Naive thymus-derived CD4-positive, alpha-beta T cell (primary cell): ENCODE measurements at regions of chr13 and their contacts with region 1.

Region 1: DNA sequence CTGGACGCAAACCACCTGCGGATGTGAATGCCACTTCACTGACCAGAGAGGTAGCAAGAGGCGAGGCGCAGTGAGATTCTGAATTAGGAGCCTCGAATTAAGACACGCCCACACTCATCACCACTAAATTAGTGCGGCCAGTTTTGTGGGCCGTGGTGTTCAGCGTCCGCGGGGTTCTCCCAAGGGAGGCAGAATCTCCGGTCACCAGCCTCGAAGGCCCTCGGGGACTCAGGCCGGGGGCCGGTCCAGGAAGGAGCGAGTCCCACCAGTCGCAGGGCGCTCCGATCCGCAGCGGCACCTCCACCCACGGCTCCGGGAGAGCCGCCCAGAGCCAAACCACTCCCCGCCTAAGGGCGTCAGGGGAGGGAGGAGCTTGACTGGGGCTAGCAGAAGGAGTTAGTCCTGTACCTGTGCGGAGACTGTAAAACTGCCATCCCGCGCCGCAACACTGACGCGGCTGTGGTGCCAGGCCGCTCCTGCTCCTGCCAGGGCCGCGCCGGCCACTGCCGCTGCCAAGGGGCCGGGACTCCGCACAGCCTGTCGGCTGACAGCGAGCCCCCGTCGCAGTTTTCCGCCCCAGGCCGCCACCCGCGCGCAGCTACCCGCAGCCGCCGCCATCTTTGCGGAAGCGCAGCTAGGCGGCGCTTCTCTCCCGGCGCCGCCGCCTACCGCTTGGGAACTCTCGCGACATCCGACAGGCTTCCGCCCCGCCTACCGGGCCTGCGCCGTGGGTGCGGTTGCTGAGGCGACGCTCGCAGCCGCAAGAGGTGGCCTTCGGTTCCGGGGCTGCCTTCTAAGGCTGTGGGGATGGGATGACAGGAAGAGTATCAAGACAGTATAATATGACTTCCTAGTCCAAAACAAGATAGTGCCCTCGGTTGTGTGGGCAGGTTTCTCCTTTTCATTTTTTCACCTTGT is at the start of gene MICU2:
- DNase-seq: peak; percentile 92 to 98 (median 96)
- ATAC-seq: peak; percentile 95
- H3K4me3 ChIP-seq: peak within 1 kb of the TSS; percentile 66
- H3K4me3 Mint-ChIP-seq: peak within 1 kb of the TSS; percentile 77 to 94 (median 88)
- H3K27ac ChIP-seq: peak within 1 kb of the TSS; percentile 93
- H3K27ac Mint-ChIP-seq: peak within 1 kb of the TSS; percentile 91 to 97 (median 95)
- H3K4me1 ChIP-seq: peaks cover 16 to 27% of the 10 kb centered on the region in 2 donors
- H3K4me1 Mint-ChIP-seq: peaks cover 25 to 53% (median 49%) of the 10 kb centered on the region in 7 donors
- H3K27me3 ChIP-seq: no peaks in the 10 kb centered on the region
- H3K27me3 Mint-ChIP-seq: peaks cover 0 to 21% (median 7%) of the 10 kb centered on the region in 5 donors
- total RNA-seq, gene MICU2: 32.5 to 45.6 (median 37.5) TPM

Region 2: GRCh38 chr13:19782049-19782726 is 1821.6 kb before region 1 on chr13:
- CTCF ChIA-PET with region 1: no interaction called
- POLR2A ChIA-PET with region 1: no interaction called
- intact Hi-C with region 1: loop called (anchors 2 to 5 kb)
- DNase-seq: peak; percentile 26 to 61 (median 49)
- ATAC-seq: peak; percentile 63
- H3K4me3 ChIP-seq: peak overlapping the region; percentile 99
- H3K4me3 Mint-ChIP-seq: peak overlapping the region; percentile 96 to 100 (median 98)
- H3K27ac ChIP-seq: peak overlapping the region; percentile 98
- H3K27ac Mint-ChIP-seq: peak overlapping the region; percentile 96 to 100 (median 99)
- H3K4me1 ChIP-seq: peaks cover 0 to 8% of the 10 kb centered on the region in 2 donors
- H3K4me1 Mint-ChIP-seq: peaks cover 0 to 13% (median 10%) of the 10 kb centered on the region in 7 donors
- H3K27me3 ChIP-seq: no peaks in the 10 kb centered on the region
- H3K27me3 Mint-ChIP-seq: peaks cover 0 to 5% (median 0%) of the 10 kb centered on the region in 5 donors

Region 3: DNA sequence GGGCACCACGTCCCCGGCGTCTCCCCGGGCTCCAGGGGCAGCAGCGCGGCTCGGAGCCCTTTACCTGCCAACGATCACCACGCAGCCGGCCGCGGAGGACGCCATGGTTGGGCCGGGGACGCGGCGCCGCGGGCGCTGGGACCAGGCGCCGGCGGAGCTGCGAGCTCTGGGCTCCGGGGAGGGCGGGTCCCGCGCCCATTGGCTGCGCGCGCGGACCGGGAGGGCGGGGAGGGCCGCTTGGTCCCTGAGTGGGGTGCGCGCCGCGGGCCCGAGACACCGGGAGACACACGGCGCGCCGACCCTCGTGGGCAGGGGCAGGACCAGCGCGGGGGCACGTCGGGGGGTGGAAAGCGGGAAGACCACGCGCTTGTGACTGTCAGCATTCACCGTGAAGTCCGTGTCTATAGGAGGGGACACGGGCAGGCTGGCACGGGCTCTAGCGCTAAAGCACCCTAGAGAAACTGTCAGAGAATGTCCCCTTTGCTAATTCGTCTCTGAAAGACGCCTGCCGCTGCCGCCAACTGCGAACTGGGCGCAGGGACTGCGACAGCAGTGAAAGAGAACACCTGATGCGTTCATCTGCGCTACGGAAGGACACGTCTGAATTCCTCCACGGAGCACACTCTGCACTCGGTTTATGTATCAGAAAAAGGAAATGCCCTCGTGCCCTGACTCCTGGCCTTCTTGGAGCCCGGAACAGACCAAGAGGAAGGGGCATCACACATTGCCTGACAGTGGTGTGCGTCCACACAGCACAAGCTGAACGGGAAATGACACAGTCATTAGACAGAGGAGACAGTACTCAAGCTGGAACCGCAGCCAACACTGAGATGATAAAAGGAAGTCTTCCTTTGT is 1077.9 kb before region 1 on chr13 and contains the start of gene CRYL1:
- CTCF ChIA-PET with region 1: no interaction called
- POLR2A ChIA-PET with region 1: no interaction called
- intact Hi-C with region 1: loop called in 1 of 2 experiments (anchors 5 kb)
- DNase-seq: peak; percentile 56 to 78 (median 68)
- ATAC-seq: peak; percentile 92
- H3K4me3 ChIP-seq: peak within 1 kb of the TSS; percentile 68
- H3K4me3 Mint-ChIP-seq: peak within 1 kb of the TSS; percentile 76 to 94 (median 87)
- H3K27ac ChIP-seq: peak within 1 kb of the TSS; percentile 65
- H3K27ac Mint-ChIP-seq: peak within 1 kb of the TSS; percentile 66 to 96 (median 88)
- H3K4me1 ChIP-seq: peaks cover 0 to 7% of the 10 kb centered on the region in 2 donors
- H3K4me1 Mint-ChIP-seq: peaks cover 11 to 40% (median 25%) of the 10 kb centered on the region in 7 donors
- H3K27me3 ChIP-seq: no peaks in the 10 kb centered on the region
- H3K27me3 Mint-ChIP-seq: peaks cover 0 to 9% (median 0%) of the 10 kb centered on the region in 5 donors
- total RNA-seq, gene CRYL1: 12.3 to 21.2 (median 16.3) TPM

Region 4: GRCh38 chr13:20902438-20903163 is 701.2 kb before region 1 on chr13 and contains the start of gene XPO4:
- CTCF ChIA-PET with region 1: no interaction called
- POLR2A ChIA-PET with region 1: interaction called, 3 read pairs
- intact Hi-C with region 1: loop called in 1 of 2 experiments (anchors 5 kb)
- DNase-seq: peak; percentile 68 to 85 (median 77)
- ATAC-seq: peak; percentile 97
- H3K4me3 ChIP-seq: peak within 1 kb of the TSS; percentile 98
- H3K4me3 Mint-ChIP-seq: peak within 1 kb of the TSS; percentile 93 to 98 (median 96)
- H3K27ac ChIP-seq: peak within 1 kb of the TSS; percentile 83
- H3K27ac Mint-ChIP-seq: peak within 1 kb of the TSS; percentile 89 to 98 (median 95)
- H3K4me1 ChIP-seq: peaks cover 10 to 21% of the 10 kb centered on the region in 2 donors
- H3K4me1 Mint-ChIP-seq: peaks cover 15 to 41% (median 32%) of the 10 kb centered on the region in 7 donors
- H3K27me3 ChIP-seq: no peaks in the 10 kb centered on the region
- H3K27me3 Mint-ChIP-seq: peaks cover 0 to 3% (median 0%) of the 10 kb centered on the region in 5 donors
- total RNA-seq, gene XPO4: 20.9 to 26.5 (median 23.5) TPM

Region 5: DNA sequence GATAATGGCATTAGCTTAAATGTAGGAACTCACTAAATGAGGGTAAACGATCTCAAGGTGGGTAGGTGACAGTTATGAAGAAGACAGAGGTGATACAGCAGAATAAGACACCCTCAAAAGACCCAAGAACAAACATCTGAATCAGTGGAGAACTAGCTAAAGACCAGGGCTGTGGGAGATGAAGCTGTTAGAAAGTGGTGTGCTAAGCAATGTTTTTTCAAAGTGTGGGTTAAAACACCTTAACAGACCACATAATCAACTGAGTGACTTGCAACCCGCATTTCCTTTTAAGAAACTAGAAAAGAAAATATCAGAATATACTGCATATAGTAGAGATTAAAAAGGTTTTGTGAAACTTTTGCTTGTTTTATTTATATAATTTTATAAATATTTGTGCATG is 214.7 kb before region 1 on chr13:
- CTCF ChIA-PET with region 1: no interaction called
- POLR2A ChIA-PET with region 1: no interaction called
- intact Hi-C with region 1: no loop called
- DNase-seq: no peak
- ATAC-seq: no peak
- H3K4me3 ChIP-seq: no peak overlapping the region
- H3K4me3 Mint-ChIP-seq: no peak overlapping the region
- H3K27ac ChIP-seq: no peak overlapping the region
- H3K27ac Mint-ChIP-seq: peak overlapping the region in 7 of 9 donors; percentile 8 to 70 (median 46)
- H3K4me1 ChIP-seq: no peaks in the 10 kb centered on the region
- H3K4me1 Mint-ChIP-seq: peaks cover 7 to 23% (median 15%) of the 10 kb centered on the region in 7 donors
- H3K27me3 ChIP-seq: no peaks in the 10 kb centered on the region
- H3K27me3 Mint-ChIP-seq: no peaks in the 10 kb centered on the region

Region 6: DNA sequence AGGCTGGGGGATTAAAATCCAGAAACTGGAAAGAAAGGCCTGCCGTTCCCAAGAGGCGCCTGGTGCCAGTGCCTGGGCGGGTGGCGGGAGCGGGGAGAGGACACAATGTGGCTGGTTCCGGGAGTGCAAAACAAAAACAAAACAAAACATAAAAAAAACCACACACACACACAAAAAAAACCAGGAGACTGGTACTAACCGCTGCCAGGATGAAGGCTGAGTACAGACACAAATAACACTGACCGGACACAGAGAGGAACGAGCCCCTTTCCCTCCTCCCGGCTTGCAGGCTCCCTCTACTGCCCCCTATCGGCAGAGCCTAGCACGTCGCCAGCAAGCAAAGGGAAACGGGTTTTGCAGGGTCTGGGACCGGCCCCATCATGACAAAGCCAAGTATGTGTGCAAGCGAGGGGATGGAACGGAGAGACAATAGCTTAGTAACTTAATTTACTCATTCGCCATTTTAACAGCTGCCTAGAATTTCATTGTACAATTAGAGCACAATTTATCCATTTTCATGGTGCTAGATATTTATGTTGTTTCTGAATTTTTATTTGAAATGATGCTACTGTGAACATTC is 126.8 kb before region 1 on chr13:
- CTCF ChIA-PET with region 1: no interaction called
- POLR2A ChIA-PET with region 1: no interaction called
- intact Hi-C with region 1: loop called in 1 of 2 experiments (anchors 5 kb)
- DNase-seq: peak; percentile 59 to 82 (median 65)
- ATAC-seq: peak; percentile 94
- H3K4me3 ChIP-seq: peak overlapping the region; percentile 50
- H3K4me3 Mint-ChIP-seq: peak overlapping the region; percentile 74 to 87 (median 82)
- H3K27ac ChIP-seq: peak overlapping the region; percentile 24
- H3K27ac Mint-ChIP-seq: peak overlapping the region in 8 of 9 donors; percentile 22 to 86 (median 58)
- H3K4me1 ChIP-seq: no peaks in the 10 kb centered on the region
- H3K4me1 Mint-ChIP-seq: peaks cover 7 to 17% (median 11%) of the 10 kb centered on the region in 7 donors
- H3K27me3 ChIP-seq: no peaks in the 10 kb centered on the region
- H3K27me3 Mint-ChIP-seq: peaks cover 0 to 5% (median 0%) of the 10 kb centered on the region in 5 donors

Region 7: DNA sequence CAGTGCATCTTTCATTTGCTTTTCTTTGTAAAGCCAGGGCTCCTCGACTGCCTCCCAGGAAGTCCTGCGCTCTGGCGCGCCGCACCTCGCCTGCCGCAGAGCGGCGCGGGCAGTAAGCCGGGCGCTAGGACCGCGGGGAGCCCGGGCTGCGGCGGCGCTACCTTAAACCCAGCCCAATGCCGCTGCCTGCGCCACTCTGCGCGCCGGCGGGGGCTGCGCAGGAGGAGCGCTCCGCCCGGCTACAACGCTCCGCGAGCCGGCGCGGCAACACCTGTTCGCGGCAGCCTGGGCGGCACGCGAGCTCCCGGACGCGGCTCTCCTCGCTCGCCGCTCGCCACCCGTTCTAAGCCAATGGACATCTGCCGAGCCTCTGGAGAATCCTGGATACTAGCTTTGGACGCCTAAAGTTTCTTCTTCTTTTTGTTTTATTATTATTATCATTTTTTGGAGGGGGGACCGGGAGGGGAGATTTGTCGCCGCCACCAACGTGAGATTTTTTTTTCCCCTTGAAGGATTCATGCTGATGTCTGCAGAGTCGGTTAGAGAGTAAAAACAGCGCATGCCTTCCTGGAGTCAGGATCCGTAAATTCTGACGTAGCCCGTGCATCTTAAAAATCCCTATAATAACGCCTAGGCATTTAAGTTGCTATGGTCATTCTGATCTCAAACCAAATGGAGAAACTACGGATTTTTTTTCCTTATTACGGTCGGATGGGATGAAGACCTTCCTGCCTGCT is 67.3 kb after region 1 on chr13 and contains the start of gene FGF9:
- CTCF ChIA-PET with region 1: interaction called, 3 read pairs
- POLR2A ChIA-PET with region 1: interaction called, 86 read pairs
- intact Hi-C with region 1: loop called (anchors 1 kb)
- DNase-seq: peak; percentile 76 to 88 (median 86)
- ATAC-seq: peak; percentile 89
- H3K4me3 ChIP-seq: peak within 1 kb of the TSS; percentile 92
- H3K4me3 Mint-ChIP-seq: peak within 1 kb of the TSS; percentile 88 to 98 (median 93)
- H3K27ac ChIP-seq: peak within 1 kb of the TSS; percentile 48
- H3K27ac Mint-ChIP-seq: peak within 1 kb of the TSS; percentile 61 to 94 (median 78)
- H3K4me1 ChIP-seq: peaks cover 19 to 32% of the 10 kb centered on the region in 2 donors
- H3K4me1 Mint-ChIP-seq: peaks cover 27 to 45% (median 44%) of the 10 kb centered on the region in 7 donors
- H3K27me3 ChIP-seq: peaks cover 0 to 4% of the 10 kb centered on the region in 2 donors
- H3K27me3 Mint-ChIP-seq: peaks cover 5 to 77% (median 20%) of the 10 kb centered on the region in 5 donors
- total RNA-seq, gene FGF9: 0.19 to 5.6 (median 2.0) TPM

Region 8: GRCh38 chr13:21932996-21933395 is 329.2 kb after region 1 on chr13:
- CTCF ChIA-PET with region 1: no interaction called
- POLR2A ChIA-PET with region 1: no interaction called
- intact Hi-C with region 1: no loop called
- DNase-seq: no peak
- ATAC-seq: no peak
- H3K4me3 ChIP-seq: no peak overlapping the region
- H3K4me3 Mint-ChIP-seq: no peak overlapping the region
- H3K27ac ChIP-seq: no peak overlapping the region
- H3K27ac Mint-ChIP-seq: no peak overlapping the region
- H3K4me1 ChIP-seq: no peaks in the 10 kb centered on the region
- H3K4me1 Mint-ChIP-seq: peaks cover 0 to 4% (median 0%) of the 10 kb centered on the region in 7 donors
- H3K27me3 ChIP-seq: no peaks in the 10 kb centered on the region
- H3K27me3 Mint-ChIP-seq: no peaks in the 10 kb centered on the region